GM18951 (cell line): ENCODE measurements at regions of chr20 and their contacts with region 1.

Region 1: GRCh38 chr20:62386383-62387218 is at the start of gene RPS21:
- POLR2A ChIP-seq: peak; percentile 96

Region 2: DNA sequence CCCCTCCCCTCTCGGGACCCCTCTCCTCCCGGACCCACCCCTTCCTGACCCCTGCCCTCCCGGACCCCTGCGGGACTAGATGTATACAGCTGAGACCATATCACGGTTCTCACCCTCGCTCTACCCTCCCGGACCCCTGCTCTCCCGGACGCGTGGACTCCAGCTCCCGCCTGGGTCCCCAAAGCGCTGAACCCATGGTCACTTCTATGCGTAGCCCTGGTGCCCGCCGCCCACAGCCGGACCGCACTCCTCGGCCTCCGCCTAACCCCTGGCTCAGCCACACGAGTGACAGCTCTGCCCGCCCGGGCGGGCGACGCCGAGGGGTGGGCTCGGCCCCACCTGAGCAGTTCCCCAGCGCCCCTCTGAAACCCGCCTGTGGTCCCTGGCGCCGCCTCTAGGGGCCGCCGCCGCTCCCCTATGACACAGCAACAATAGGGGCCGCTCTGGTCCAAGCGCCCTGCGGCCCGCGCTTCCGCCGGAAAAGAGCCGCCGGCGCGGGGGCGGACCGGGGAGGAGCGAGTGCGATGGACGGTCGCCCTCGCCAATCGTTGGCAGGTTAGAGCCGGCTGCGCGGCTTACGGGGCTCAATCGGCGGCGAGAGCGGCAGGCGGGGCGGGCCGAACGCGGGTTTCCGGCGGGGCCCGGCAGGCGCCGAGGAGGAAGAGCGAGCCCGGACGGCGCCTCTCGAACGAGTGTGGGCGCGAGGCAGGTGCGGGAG is 84.1 kb before region 1 on chr20 and contains the start of gene ADRM1:
- in situ Hi-C with region 1: loop called (anchors 10 kb)
- POLR2A ChIP-seq: peak; percentile 86